GM12878 (cell line): ENCODE measurements at regions of chr4 and their contacts with region 1.

Region 1: DNA sequence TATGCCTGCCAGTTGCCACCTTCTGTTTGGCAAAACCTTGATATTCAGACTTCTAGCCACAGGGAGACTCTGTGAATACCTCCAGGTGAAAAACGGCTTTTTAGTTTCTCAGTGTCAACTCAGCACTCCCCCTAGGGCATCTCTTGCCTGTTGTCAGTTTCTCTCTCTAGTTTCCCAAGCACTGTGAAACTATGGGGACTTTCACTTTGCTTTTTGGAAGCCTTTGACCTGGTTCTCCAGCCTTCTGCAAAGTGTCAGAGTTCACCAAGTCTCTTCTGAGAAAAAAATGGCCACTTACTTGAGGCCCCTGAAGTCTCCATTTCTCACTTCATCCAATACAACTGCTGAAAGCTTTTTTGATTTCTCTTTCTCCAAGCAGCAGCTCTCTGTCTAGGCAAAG is 521.5 kb downstream of the INPP4B start:
- DNase-seq: peak; percentile 5
- ATAC-seq: peak; percentile 93
- H3K4me3 ChIP-seq: no peak overlapping the region
- H3K27ac ChIP-seq: no peak overlapping the region
- H3K4me1 ChIP-seq: no peaks in the 10 kb centered on the region
- H3K27me3 ChIP-seq: no peaks in the 10 kb centered on the region
- CTCF ChIP-seq: 0 out of 6 replicates have a peak, but pooled peaks of 2 of the 3 experiments have one; percentile 1 to 5
- EP300 ChIP-seq: no peak
- POLR2A ChIP-seq: no peak
- RAD21 ChIP-seq: no peak

Region 2: GRCh38 chr4:142339053-142339452 is 14.5 kb after region 1 on chr4:
- CTCF ChIA-PET with region 1: interaction called, 4 read pairs
- POLR2A ChIA-PET with region 1: no interaction called
- RAD21 ChIA-PET with region 1: interaction called, 3 read pairs
- SMC1A ChIA-PET with region 1: interaction called, 44 read pairs
- in situ Hi-C with region 1: no loop called
- intact Hi-C with region 1: no loop called
- DNase-seq: no peak
- ATAC-seq: peak; percentile 30; the same call in 2 of the 3 replicates
- H3K4me3 ChIP-seq: no peak overlapping the region
- H3K27ac ChIP-seq: no peak overlapping the region
- H3K4me1 ChIP-seq: no peaks in the 10 kb centered on the region
- H3K27me3 ChIP-seq: no peaks in the 10 kb centered on the region
- CTCF ChIP-seq: no peak
- EP300 ChIP-seq: no peak
- POLR2A ChIP-seq: no peak
- RAD21 ChIP-seq: no peak

Region 3: GRCh38 chr4:142585411-142585810 is 260.8 kb after region 1 on chr4:
- CTCF ChIA-PET with region 1: no interaction called
- POLR2A ChIA-PET with region 1: no interaction called
- RAD21 ChIA-PET with region 1: no interaction called
- SMC1A ChIA-PET with region 1: no interaction called
- in situ Hi-C with region 1: no loop called
- intact Hi-C with region 1: no loop called
- DNase-seq: no peak
- ATAC-seq: no peak
- H3K4me3 ChIP-seq: no peak overlapping the region
- H3K27ac ChIP-seq: no peak overlapping the region
- H3K4me1 ChIP-seq: no peaks in the 10 kb centered on the region
- H3K27me3 ChIP-seq: no peaks in the 10 kb centered on the region
- CTCF ChIP-seq: no peak
- EP300 ChIP-seq: no peak
- POLR2A ChIP-seq: no peak
- RAD21 ChIP-seq: no peak